ENCODE measurements at regions of chr7 and their contacts with region 1.

Region 1: DNA sequence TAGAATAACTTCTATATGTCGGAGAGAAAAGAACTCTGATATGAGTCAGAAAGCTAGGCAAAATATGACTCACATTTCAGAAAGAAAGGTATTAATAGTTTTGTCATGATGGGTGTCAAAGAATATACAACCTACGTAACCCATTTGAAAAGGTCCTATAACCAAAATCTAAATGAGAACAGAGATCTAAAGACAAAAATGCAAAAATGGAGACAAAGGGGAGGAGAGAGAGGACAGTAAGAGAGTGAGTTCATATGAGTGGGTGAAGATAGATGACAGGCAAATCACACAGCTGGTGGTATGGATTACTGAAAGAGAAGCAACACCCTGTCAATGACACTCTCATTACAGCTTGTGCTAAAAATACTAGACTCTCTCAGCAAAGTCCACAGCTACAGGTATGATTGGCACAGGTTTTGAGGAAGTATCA is 25.6 kb downstream of the ANKMY2 start:
- DNase-seq: peak; percentile 3
- H3K4me3 ChIP-seq: no peak overlapping the region
- H3K27ac ChIP-seq: no peak overlapping the region
- H3K4me1 ChIP-seq: no peaks in the 10 kb centered on the region
- CTCF ChIP-seq: no peak

Region 2: GRCh38 chr7:16634271-16634738 is 14.3 kb after region 1 on chr7:
- CTCF ChIA-PET with region 1: no interaction called
- POLR2A ChIA-PET with region 1: interaction called, 12 read pairs
- intact Hi-C with region 1: no loop called
- DNase-seq: no peak
- H3K4me3 ChIP-seq: no peak overlapping the region
- H3K27ac ChIP-seq: no peak overlapping the region
- H3K4me1 ChIP-seq: no peaks in the 10 kb centered on the region
- CTCF ChIP-seq: no peak